Naive thymus-derived CD4-positive, alpha-beta T cell (primary cell): ENCODE measurements at regions of chr13 and their contacts with region 1.

Region 1: DNA sequence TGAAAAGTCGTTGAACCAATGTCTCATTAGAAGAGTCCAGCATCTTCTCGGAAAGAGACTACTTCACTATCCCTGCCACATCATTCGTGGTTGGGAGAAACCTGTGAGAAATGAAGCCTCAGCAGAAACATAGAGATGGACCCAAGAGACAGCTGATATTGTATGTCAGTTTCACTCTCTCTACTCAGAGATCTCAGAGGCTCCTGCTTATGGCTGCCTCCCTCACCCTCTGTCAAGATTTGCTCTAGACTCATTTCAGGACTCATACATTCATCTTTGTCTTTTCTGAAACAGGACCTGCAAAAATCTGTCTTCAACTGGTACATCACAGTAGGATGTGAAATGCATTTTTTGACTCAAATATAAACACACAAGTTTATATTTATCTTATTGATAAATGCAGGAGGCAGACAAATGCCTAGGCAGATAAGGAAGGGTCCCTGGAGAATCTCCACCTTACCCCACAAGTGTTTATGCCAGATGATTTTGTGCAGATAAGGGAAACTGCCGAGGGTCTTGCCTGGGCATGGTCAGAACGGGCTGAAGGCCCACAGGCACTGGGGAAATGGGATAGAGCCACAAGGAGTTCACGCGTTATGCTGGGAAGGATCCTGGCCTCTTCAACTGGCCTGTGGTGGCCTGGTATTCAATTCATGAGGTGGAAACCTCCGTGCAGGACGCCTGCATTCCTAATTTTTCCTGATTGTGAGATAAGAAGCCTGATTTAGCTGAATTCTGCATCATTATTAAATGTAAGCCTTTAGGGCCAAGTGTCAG is 1834.0 kb upstream of the PCDH20 start:
- DNase-seq: no peak
- ATAC-seq: no peak
- H3K4me3 ChIP-seq: no peak overlapping the region
- H3K4me3 Mint-ChIP-seq: no peak overlapping the region
- H3K27ac ChIP-seq: no peak overlapping the region
- H3K27ac Mint-ChIP-seq: no peak overlapping the region
- H3K4me1 ChIP-seq: no peaks in the 10 kb centered on the region
- H3K4me1 Mint-ChIP-seq: no peaks in the 10 kb centered on the region
- H3K27me3 ChIP-seq: no peaks in the 10 kb centered on the region
- H3K27me3 Mint-ChIP-seq: no peaks in the 10 kb centered on the region

Region 2: DNA sequence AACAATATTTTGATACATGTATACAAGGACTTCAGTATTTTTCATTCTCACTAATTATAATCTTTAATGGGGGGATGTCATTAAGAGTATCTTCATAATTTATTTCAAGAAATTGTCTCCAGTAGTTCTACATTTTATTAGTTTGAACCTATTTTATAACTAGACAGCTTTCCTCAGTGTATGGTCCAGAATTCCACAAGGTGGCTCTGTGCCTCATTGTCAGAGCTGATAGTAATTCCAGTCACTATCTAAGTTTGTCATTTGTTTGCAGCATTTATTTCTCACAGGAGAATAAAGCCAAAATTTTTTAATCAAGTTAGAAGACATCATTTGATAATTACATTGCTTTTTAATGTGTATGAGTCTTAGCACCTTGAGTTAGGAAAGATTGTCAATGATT is 200.9 kb before region 1 on chr13:
- CTCF ChIA-PET with region 1: no interaction called
- POLR2A ChIA-PET with region 1: no interaction called
- intact Hi-C with region 1: no loop called
- DNase-seq: no peak
- ATAC-seq: no peak
- H3K4me3 ChIP-seq: no peak overlapping the region
- H3K4me3 Mint-ChIP-seq: no peak overlapping the region
- H3K27ac ChIP-seq: no peak overlapping the region
- H3K27ac Mint-ChIP-seq: no peak overlapping the region
- H3K4me1 ChIP-seq: no peaks in the 10 kb centered on the region
- H3K4me1 Mint-ChIP-seq: no peaks in the 10 kb centered on the region
- H3K27me3 ChIP-seq: no peaks in the 10 kb centered on the region
- H3K27me3 Mint-ChIP-seq: no peaks in the 10 kb centered on the region

Region 3: DNA sequence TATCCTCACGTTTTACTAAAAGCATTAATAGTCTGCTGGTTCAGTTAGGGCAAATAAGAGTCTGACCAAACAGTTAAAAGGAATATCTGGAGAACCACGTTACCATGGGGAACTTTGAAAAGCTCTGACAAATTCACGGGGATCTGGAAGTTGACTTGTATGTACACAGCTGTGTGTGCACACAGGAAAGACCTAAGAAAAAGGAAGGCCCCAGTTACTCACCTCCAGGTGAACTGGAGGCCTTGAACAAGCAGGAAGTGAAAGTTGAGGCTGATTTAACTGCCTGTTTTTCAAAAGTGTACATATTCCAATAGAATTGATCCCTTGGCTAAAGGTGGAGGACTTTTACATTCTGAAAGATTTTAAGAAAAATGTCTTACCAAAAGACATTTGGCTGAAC is 57.6 kb after region 1 on chr13:
- CTCF ChIA-PET with region 1: no interaction called
- POLR2A ChIA-PET with region 1: no interaction called
- intact Hi-C with region 1: loop called in 1 of 2 experiments (anchors 10 kb)
- DNase-seq: no peak
- ATAC-seq: no peak
- H3K4me3 ChIP-seq: no peak overlapping the region
- H3K4me3 Mint-ChIP-seq: no peak overlapping the region
- H3K27ac ChIP-seq: no peak overlapping the region
- H3K27ac Mint-ChIP-seq: no peak overlapping the region
- H3K4me1 ChIP-seq: no peaks in the 10 kb centered on the region
- H3K4me1 Mint-ChIP-seq: no peaks in the 10 kb centered on the region
- H3K27me3 ChIP-seq: no peaks in the 10 kb centered on the region
- H3K27me3 Mint-ChIP-seq: no peaks in the 10 kb centered on the region